BJ (cell line): ENCODE measurements at regions of chr16 and their contacts with region 1.

Region 1: DNA sequence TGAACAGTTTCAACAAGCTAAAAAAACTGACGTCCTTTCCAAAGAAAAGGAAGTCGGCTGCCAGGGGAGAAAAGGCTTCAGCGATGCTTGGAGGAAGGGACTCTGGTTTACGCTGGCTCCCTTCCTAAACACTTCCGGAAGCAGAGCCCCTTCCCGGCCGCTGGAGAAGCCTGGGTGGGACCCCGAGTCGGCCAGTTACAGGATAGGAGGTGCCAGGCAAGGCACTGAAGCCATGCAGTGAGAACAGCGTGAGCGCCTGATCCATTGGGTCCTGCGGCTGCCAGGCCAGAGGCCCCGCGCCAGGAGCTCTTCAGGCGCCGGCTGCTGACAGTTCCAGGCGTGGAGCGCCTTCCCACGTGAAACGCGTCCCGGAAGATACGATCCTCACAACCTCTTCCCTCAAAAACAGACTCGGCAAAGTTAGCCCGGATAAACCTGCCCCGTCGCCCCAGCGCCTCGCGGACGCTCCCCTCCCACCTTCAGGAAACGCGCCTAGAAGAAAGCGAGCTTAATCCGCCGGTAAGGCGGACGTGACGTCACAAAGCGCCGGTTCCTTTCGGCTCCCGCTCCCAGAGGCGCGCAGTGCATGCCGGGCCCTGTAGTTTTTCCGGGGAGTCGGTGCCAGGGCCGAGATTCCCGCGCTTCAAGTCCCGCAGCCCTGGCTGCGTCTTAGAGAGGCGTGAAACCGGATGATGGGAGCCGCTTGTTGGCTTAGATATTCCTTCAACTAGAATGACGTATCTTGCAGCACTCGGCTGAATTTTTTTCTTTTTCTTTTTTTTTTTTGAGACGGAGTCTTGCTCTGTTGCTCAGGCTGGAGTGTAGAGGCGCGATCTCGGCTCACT is at the start of gene ADAT1:
- DNase-seq: peak; percentile 90
- H3K4me3 ChIP-seq: peak within 1 kb of the TSS; percentile 54
- H3K27me3 ChIP-seq: no peaks in the 10 kb centered on the region
- CTCF ChIP-seq: no peak
- polyA plus RNA-seq, gene ADAT1: 18.9 and 26.5 TPM in 2 replicates

Region 2: DNA sequence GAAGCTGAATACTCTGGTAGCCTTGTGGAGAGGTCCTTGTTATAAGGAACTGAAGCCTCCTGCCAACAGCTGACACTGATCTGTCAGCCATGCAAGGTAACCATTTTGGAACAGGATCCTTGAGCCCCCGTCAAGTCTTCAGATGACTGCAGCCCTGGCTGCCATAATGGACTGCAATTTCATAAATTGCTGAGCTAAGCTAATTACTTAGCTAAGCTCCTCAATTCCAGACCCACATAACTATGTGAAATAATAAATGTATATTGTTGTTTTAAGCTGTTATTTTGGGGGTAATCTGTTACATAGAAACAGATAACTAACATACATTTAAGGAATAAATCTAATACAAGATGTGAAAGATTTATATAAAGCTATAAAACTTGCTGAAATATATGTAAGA is 16.5 kb before region 1 on chr16:
- CTCF ChIA-PET with region 1: interaction called, 18 read pairs
- POLR2A ChIA-PET with region 1: no interaction called
- DNase-seq: no peak
- H3K4me3 ChIP-seq: no peak overlapping the region
- H3K27me3 ChIP-seq: no peaks in the 10 kb centered on the region
- CTCF ChIP-seq: no peak

Region 3: DNA sequence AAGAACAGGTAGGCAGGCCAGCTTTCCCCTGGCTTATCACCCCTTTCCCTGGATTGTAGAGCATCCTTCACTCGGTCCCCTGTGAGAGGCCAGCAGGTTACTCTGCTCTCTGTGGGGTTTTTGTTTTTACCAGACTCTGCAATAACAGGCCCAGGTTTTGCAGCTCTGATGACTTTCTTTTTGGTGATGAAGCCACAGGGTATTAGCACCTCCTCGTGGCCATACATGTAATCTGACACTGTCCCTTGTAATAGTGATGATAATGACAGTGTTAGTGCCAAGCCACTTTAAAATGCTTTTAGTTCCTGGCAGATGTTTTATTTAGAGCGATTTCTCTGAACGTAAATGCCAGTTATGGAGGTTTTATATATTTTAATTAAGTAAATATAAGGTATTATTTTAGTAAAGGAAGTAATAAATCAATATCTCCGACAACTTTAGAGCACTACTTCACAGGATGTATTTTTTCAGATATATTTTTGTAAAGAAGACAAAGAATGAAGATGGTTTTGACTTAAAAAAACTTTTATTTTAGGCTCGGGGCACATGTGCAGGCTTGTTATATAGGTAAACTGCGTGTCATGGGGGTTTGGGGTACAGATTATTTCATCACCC is 141.3 kb after region 1 on chr16:
- CTCF ChIA-PET with region 1: interaction called, 17 read pairs
- POLR2A ChIA-PET with region 1: no interaction called
- DNase-seq: no peak
- H3K4me3 ChIP-seq: no peak overlapping the region
- H3K27me3 ChIP-seq: no peaks in the 10 kb centered on the region
- CTCF ChIP-seq: peak; percentile 80